CD8-positive, alpha-beta T cell (primary cell): ENCODE measurements at regions of chr5 and their contacts with region 1.

Region 1: DNA sequence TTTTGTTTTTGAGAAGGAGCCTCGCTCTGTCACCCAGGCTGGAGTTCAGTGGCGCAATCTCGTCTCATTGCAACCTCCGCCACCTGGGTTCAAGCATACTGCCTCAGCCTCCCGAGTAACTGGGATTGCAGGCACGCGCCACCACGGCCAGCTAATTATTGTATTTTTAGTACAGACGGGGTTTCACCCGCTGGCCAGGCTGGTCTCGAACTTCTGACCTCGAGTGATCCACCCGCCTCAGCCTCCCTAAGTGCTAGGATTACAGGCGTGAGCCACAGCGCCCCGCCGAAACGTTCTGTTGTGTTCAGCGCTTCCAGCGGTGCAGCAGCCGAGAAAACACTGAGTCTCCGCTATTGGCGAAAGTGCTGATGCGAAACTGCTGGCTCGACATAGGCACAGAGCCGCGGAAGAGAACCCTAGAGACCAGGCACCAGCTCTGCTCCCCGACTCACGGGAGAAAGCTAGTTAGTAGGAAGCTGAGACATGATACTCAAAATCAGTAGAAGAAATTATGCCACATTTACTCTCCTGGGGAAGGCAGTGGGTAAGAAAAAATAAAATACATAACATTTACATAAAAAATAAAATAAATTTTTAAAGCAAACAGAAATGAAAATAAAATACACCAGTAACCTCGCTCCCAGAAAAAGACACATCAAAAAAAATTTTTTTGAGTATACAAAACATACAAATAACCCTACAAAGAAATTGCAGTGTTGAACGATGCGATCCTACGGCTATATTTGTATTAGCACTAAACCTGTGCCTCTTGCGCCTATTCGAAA is 31.6 kb downstream of the ANXA2R start:
- DNase-seq: peak; percentile 86 to 97 (median 93)
- ATAC-seq: peak; percentile 63
- H3K4me3 ChIP-seq: peak overlapping the region; percentile 70 to 81
- H3K4me3 Mint-ChIP-seq: peak overlapping the region; percentile 98
- H3K27ac ChIP-seq: peak overlapping the region; percentile 94 to 96
- H3K27ac Mint-ChIP-seq: peak overlapping the region; percentile 96
- H3K4me1 ChIP-seq: peaks cover 25% of the 10 kb centered on the region
- H3K4me1 Mint-ChIP-seq: peaks cover 34% of the 10 kb centered on the region
- H3K27me3 ChIP-seq: no peaks in the 10 kb centered on the region
- H3K27me3 Mint-ChIP-seq: no peaks in the 10 kb centered on the region
- CTCF ChIP-seq: no peak

Region 2: DNA sequence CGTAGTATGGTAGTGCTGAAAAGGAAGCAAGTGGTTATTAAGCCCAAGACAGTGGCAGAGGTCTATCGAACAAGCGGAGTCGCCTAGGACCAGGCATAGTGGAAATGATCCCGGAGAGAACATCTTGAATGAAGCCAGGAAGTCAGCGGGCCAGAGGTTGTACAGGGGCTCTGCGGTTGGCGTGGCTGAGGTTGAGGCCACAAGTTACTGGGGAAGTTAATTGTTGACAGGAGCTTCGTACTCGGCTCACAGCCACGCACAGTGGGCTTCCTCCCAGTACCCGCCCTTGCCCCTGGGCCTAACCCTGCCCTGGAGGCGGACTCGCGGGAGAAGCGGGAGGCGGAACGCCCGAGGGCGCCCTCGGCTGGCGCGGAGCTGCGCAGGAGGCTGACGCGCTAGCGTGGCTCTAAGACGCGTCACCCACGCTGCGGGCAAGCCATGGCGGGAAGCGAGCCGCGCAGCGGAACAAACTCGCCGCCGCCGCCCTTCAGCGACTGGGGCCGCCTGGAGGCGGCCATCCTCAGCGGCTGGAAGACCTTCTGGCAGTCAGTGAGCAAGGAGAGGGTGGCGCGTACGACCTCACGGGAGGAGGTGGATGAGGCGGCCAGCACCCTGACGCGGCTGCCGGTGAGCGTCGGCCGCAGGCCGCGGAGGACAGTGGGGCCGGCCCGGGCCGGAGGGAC is 1083.5 kb before region 1 on chr5 and contains the start of gene FBXO4:
- CTCF ChIA-PET with region 1: no interaction called
- POLR2A ChIA-PET with region 1: no interaction called
- intact Hi-C with region 1: no loop called
- DNase-seq: peak; percentile 79 to 96 (median 88)
- ATAC-seq: peak; percentile 96
- H3K4me3 ChIP-seq: peak within 1 kb of the TSS; percentile 79 to 87
- H3K4me3 Mint-ChIP-seq: peak within 1 kb of the TSS; percentile 87
- H3K27ac ChIP-seq: peak within 1 kb of the TSS; percentile 91 to 98
- H3K27ac Mint-ChIP-seq: peak within 1 kb of the TSS; percentile 99
- H3K4me1 ChIP-seq: peaks cover 16% of the 10 kb centered on the region
- H3K4me1 Mint-ChIP-seq: peaks cover 28% of the 10 kb centered on the region
- H3K27me3 ChIP-seq: no peaks in the 10 kb centered on the region
- H3K27me3 Mint-ChIP-seq: no peaks in the 10 kb centered on the region
- CTCF ChIP-seq: peak; percentile 57
- total RNA-seq, gene FBXO4: 4.4 to 4.7 TPM

Region 3: DNA sequence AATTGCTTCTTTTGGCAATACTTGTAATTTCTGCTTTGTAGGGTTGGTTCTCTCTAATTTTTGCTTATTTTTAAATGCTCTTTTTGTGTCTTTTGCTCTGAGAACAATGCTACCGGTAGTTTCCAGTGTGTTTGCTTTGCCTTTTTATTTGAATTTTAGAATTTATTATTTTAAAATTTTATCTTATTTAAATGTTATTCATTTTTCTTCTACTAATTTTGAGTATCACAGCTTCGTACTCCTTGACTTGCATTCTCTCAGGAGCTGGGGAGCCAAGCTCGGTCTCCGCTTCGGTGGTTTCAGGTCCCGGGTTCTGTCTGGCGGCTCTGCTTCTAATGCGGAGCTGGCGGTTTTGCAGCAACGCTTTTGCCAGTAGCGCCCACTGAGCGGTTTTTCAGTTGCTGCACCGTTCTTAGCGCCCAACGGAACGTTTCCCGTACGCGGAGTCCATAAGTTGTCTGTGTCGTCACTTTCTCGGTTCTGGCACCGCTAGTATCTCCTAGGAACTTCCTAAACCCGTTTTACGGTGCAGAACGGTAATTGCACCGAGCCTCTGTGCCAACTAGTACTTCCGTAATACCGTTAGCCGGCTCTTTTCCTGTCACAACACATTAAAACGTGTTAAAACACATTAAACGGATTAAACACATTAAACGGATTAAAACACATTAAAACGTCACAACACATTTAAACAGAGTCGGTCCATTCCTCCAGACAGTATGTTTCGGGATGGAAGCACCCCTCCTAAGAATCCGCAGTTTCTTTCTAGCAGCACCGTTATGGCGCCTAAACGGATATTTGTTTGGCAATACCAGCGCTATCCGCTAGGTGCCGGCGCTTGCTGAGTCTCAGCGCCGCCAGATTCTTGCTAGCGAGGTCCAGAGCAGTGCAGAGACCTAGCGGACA is 14.1 kb before region 1 on chr5:
- CTCF ChIA-PET with region 1: interaction called, 73 read pairs
- POLR2A ChIA-PET with region 1: interaction called, 401 read pairs
- intact Hi-C with region 1: loop called (anchors 1 kb)
- DNase-seq: peak; percentile 75 to 94 (median 88)
- ATAC-seq: peak; percentile 63
- H3K4me3 ChIP-seq: peak overlapping the region; percentile 78 to 92
- H3K4me3 Mint-ChIP-seq: peak overlapping the region; percentile 99
- H3K27ac ChIP-seq: peak overlapping the region; percentile 97
- H3K27ac Mint-ChIP-seq: peak overlapping the region; percentile 100
- H3K4me1 ChIP-seq: peaks cover 23% of the 10 kb centered on the region
- H3K4me1 Mint-ChIP-seq: peaks cover 41% of the 10 kb centered on the region
- H3K27me3 ChIP-seq: no peaks in the 10 kb centered on the region
- H3K27me3 Mint-ChIP-seq: no peaks in the 10 kb centered on the region
- CTCF ChIP-seq: peak; percentile 93

Region 4: DNA sequence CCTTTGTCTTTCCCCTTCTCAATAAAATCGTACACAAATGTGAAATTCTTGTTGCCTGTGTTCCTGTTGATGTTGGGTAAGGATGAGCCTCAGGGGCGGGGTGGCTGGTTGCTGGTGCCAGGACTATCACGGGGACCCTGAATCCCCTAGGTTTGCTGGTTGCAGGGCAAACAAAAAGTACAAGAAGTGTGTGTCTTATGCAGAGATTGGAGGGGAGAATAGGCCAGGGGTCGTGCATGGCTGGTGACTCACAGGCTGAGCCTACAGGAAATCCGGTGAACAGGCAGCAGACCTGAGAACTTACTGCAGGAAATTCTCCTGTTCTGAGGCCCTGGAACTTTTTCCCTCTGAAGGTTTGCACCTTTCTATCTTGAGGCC is 26.0 kb after region 1 on chr5:
- CTCF ChIA-PET with region 1: interaction called, 27 read pairs
- POLR2A ChIA-PET with region 1: interaction called, 283 read pairs
- intact Hi-C with region 1: no loop called
- DNase-seq: peak in 4 of 9 experiments; percentile 38 to 65 (median 42)
- ATAC-seq: no peak
- H3K4me3 ChIP-seq: peak overlapping the region in 1 of 2 experiments; percentile 24
- H3K4me3 Mint-ChIP-seq: peak overlapping the region; percentile 58
- H3K27ac ChIP-seq: no peak overlapping the region
- H3K27ac Mint-ChIP-seq: peak overlapping the region; percentile 82
- H3K4me1 ChIP-seq: peaks cover 33% of the 10 kb centered on the region
- H3K4me1 Mint-ChIP-seq: peaks cover 50% of the 10 kb centered on the region
- H3K27me3 ChIP-seq: no peaks in the 10 kb centered on the region
- H3K27me3 Mint-ChIP-seq: no peaks in the 10 kb centered on the region
- CTCF ChIP-seq: no peak

Region 5: GRCh38 chr5:43191740-43192557 is 183.4 kb after region 1 on chr5 and contains the start of gene NIM1K:
- CTCF ChIA-PET with region 1: no interaction called
- POLR2A ChIA-PET with region 1: no interaction called
- intact Hi-C with region 1: loop called in 1 of 2 experiments (anchors 10 kb)
- DNase-seq: peak in 7 of 9 experiments; percentile 1 to 56 (median 28)
- ATAC-seq: peak; percentile 37
- H3K4me3 ChIP-seq: peak within 1 kb of the TSS; percentile 47 to 56
- H3K4me3 Mint-ChIP-seq: peak within 1 kb of the TSS; percentile 89
- H3K27ac ChIP-seq: no peak within 1 kb of the TSS
- H3K27ac Mint-ChIP-seq: peak within 1 kb of the TSS; percentile 13
- H3K4me1 ChIP-seq: peaks cover 19% of the 10 kb centered on the region
- H3K4me1 Mint-ChIP-seq: peaks cover 27% of the 10 kb centered on the region
- H3K27me3 ChIP-seq: peaks cover 4 to 8% of the 10 kb centered on the region in 2 experiments
- H3K27me3 Mint-ChIP-seq: peaks cover 24% of the 10 kb centered on the region
- CTCF ChIP-seq: no peak
- total RNA-seq, gene NIM1K: 0.14 to 0.46 TPM